ENCODE measurements at regions of chr1 and their contacts with region 1.

Region 1: DNA sequence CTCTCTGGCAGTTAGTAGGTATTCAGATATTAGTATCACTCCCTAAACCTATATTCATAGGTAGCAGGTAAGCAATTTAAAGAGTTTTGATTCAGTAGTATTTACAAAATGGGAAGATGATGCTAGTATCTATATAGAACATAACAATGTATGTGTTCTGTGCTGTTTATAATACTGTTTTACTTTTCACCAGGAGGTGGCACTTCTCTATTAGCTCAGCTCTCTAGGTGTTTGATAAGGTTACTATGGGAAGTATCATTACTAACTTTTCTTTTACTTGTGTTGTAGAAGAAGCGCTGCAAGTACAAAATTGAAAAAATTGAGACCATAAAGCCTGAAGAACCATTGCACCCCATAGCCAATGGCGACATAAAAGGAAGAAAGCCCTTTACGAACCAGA is 49.4 kb upstream of the FASLG start:
- DNase-seq: no peak
- H3K4me3 Mint-ChIP-seq: no peak overlapping the region
- H3K27ac Mint-ChIP-seq: no peak overlapping the region
- H3K4me1 Mint-ChIP-seq: peaks cover 34% of the 10 kb centered on the region
- H3K27me3 Mint-ChIP-seq: no peaks in the 10 kb centered on the region
- CTCF ChIP-seq: peak; percentile 68

Region 2: GRCh38 chr1:172638885-172639831 is 29.6 kb after region 1 on chr1:
- CTCF ChIA-PET with region 1: interaction called, 4 read pairs
- intact Hi-C with region 1: loop called (anchors 2 kb)
- DNase-seq: peak; percentile 55
- H3K4me3 Mint-ChIP-seq: peak overlapping the region; percentile 42
- H3K27ac Mint-ChIP-seq: peak overlapping the region; percentile 86
- H3K4me1 Mint-ChIP-seq: peaks cover 67% of the 10 kb centered on the region
- H3K27me3 Mint-ChIP-seq: no peaks in the 10 kb centered on the region
- CTCF ChIP-seq: no peak

Region 3: DNA sequence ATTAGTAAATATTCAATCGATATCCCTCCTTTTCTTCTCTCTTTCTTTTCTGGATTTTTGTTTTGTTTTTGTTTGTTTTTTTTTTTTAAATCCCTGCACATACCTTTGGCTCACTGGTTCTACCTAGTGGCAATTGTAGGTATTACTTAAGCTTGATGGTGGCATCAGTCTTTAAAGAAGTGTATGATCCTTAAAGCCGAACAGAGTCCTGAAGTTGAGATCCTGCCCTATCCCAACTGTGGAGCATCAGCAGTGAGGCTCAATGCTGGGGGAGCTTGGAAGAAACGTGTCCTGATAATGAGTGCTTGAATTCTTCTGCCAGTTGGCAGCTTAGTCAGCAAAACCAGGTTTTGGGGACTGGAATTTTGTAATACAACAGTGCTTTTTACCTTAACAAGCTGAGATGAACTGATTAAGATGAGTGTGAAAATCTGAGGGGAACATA is 110.2 kb after region 1 on chr1:
- CTCF ChIA-PET with region 1: interaction called, 27 read pairs
- intact Hi-C with region 1: loop called (anchors 1 kb)
- DNase-seq: peak; percentile 35
- H3K4me3 Mint-ChIP-seq: no peak overlapping the region
- H3K27ac Mint-ChIP-seq: no peak overlapping the region
- H3K4me1 Mint-ChIP-seq: peaks cover 46% of the 10 kb centered on the region
- H3K27me3 Mint-ChIP-seq: no peaks in the 10 kb centered on the region
- CTCF ChIP-seq: peak; percentile 86

Measured in Calu3 (cell line).